Naive thymus-derived CD4-positive, alpha-beta T cell (primary cell): ENCODE measurements at regions of chr9 and their contacts with region 1.

Region 1: GRCh38 chr9:133023117-133023890 is 7.5 kb upstream of the GTF3C5 start:
- DNase-seq: peak in 5 of 9 donors; percentile 11 to 55 (median 14)
- ATAC-seq: no peak
- H3K4me3 ChIP-seq: no peak overlapping the region
- H3K4me3 Mint-ChIP-seq: peak overlapping the region in 1 of 10 donors; percentile 66
- H3K27ac ChIP-seq: no peak overlapping the region
- H3K27ac Mint-ChIP-seq: peak overlapping the region in 1 of 9 donors; percentile 49
- H3K4me1 ChIP-seq: peaks cover 0 to 8% of the 10 kb centered on the region in 2 donors
- H3K4me1 Mint-ChIP-seq: peaks cover 0 to 27% (median 19%) of the 10 kb centered on the region in 7 donors
- H3K27me3 ChIP-seq: no peaks in the 10 kb centered on the region
- H3K27me3 Mint-ChIP-seq: no peaks in the 10 kb centered on the region

Region 2: DNA sequence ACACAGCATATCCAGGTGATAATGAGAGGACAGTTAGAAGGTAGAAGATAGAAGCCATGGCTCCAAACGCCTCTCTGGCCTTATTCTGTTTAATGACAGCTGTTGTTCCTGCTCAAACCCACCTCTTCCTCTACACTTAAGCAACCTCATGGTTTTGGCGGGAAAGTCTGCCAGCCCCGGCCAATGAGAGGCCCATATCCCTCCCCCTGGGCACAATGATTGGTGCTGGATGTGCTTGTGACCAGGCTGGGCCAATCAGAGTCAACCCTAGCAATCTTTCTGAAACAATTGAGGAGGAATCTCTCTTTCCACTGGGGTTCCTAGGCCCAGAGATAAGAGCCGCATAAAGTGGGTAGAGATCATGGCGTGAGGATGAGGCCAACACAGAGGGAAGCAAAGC is 49.6 kb before region 1 on chr9:
- CTCF ChIA-PET with region 1: no interaction called
- POLR2A ChIA-PET with region 1: no interaction called
- intact Hi-C with region 1: loop called in 1 of 2 experiments (anchors 5 kb)
- DNase-seq: no peak
- ATAC-seq: no peak
- H3K4me3 ChIP-seq: no peak overlapping the region
- H3K4me3 Mint-ChIP-seq: no peak overlapping the region
- H3K27ac ChIP-seq: no peak overlapping the region
- H3K27ac Mint-ChIP-seq: no peak overlapping the region
- H3K4me1 ChIP-seq: no peaks in the 10 kb centered on the region
- H3K4me1 Mint-ChIP-seq: peaks cover 5 to 12% (median 8%) of the 10 kb centered on the region in 7 donors
- H3K27me3 ChIP-seq: peaks cover 0 to 7% of the 10 kb centered on the region in 2 donors
- H3K27me3 Mint-ChIP-seq: peaks cover 12 to 34% (median 25%) of the 10 kb centered on the region in 5 donors

Region 3: DNA sequence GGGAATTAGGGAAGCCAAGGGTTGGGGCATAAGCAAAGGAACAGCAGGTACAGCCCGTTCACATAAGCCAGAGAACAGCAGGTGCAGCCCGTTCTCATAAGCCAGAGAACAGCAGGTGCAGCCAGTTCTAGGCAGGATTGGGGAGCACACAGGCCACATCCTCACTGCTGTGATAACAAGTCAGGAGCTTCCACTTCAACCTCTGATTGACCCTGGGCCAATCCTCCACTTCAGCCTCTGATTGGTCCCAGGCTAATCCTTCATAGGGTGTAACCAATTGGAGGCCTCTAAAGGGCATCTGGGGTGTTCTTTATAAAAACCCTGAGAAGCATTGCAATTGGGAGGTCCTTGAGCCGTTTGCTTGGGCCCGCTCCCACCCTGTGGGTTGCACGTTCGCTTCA is 66.0 kb after region 1 on chr9:
- CTCF ChIA-PET with region 1: no interaction called
- POLR2A ChIA-PET with region 1: no interaction called
- intact Hi-C with region 1: no loop called
- DNase-seq: no peak
- ATAC-seq: no peak
- H3K4me3 ChIP-seq: no peak overlapping the region
- H3K4me3 Mint-ChIP-seq: no peak overlapping the region
- H3K27ac ChIP-seq: no peak overlapping the region
- H3K27ac Mint-ChIP-seq: peak overlapping the region in 1 of 9 donors; percentile 30
- H3K4me1 ChIP-seq: no peaks in the 10 kb centered on the region
- H3K4me1 Mint-ChIP-seq: no peaks in the 10 kb centered on the region
- H3K27me3 ChIP-seq: no peaks in the 10 kb centered on the region
- H3K27me3 Mint-ChIP-seq: no peaks in the 10 kb centered on the region